BJ (cell line): ENCODE measurements at regions of chr5 and their contacts with region 1.

Region 1: GRCh38 chr5:119411935-119412602 is 40.2 kb upstream of the HSD17B4 start:
- DNase-seq: no peak
- H3K4me3 ChIP-seq: peak overlapping the region; percentile 38
- H3K27me3 ChIP-seq: 0 out of 2 replicates have a peak, but pooled peaks cover 1% of the 10 kb centered on the region
- CTCF ChIP-seq: peak; percentile 81

Region 2: DNA sequence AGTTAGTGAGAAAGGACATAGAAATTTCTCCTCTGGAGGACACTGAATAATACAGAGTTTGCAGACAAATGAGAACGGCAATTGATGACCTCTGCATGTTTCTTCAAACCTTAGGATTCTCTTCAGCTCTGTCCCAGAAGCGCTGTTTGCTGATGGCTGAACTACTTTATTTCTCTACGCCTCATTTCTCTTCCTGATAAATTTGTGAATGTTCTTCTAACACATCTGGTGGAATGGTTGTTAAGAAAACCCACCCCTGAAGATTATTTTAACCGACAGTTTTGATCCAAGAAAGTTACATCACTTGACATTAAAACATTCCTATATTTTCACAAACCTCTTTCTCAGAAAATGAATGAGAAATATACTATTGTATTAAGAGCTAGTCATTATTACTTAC is 1574.3 kb before region 1 on chr5:
- CTCF ChIA-PET with region 1: no interaction called
- POLR2A ChIA-PET with region 1: no interaction called
- DNase-seq: no peak
- H3K4me3 ChIP-seq: no peak overlapping the region
- H3K27me3 ChIP-seq: no peaks in the 10 kb centered on the region
- CTCF ChIP-seq: no peak

Region 3: DNA sequence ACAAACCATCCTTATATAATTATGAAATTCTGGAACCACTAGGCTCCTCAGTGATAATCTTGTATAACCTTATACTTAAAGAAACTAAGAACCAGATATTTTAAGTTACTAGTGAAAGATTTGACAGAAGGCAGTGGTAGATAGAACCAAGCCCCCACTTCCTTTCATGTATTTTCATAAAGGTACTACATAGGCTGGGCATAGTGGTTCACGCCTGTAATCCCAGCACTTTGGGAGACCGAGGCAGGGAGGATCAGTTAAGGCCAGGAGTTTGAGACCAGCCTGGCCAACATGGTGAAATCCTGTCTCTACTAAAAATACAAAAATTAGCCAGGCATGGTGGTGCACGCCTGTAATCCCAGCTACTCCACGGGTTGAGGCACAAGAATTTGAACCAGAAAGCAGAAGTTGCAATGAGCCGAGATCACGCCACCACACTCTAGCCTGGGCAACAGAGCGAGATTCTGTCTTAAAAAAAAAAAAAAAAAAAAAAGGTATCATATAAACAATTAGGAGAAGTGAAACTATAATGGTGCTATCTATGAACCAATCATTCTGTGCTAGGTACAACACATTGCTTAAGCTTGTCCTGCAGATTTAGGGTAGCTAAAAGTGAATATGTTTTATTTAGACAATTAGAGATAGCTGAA is 395.8 kb before region 1 on chr5:
- CTCF ChIA-PET with region 1: interaction called, 77 read pairs
- POLR2A ChIA-PET with region 1: no interaction called
- DNase-seq: no peak
- H3K4me3 ChIP-seq: no peak overlapping the region
- H3K27me3 ChIP-seq: no peaks in the 10 kb centered on the region
- CTCF ChIP-seq: no peak

Region 4: GRCh38 chr5:119267958-119268386 is 144.1 kb before region 1 on chr5:
- CTCF ChIA-PET with region 1: interaction called, 16 read pairs
- POLR2A ChIA-PET with region 1: no interaction called
- DNase-seq: peak; percentile 73
- H3K4me3 ChIP-seq: peak overlapping the region; percentile 75
- H3K27me3 ChIP-seq: no peaks in the 10 kb centered on the region; the same call in 1 of the 2 replicates
- CTCF ChIP-seq: peak; percentile 86

Region 5: DNA sequence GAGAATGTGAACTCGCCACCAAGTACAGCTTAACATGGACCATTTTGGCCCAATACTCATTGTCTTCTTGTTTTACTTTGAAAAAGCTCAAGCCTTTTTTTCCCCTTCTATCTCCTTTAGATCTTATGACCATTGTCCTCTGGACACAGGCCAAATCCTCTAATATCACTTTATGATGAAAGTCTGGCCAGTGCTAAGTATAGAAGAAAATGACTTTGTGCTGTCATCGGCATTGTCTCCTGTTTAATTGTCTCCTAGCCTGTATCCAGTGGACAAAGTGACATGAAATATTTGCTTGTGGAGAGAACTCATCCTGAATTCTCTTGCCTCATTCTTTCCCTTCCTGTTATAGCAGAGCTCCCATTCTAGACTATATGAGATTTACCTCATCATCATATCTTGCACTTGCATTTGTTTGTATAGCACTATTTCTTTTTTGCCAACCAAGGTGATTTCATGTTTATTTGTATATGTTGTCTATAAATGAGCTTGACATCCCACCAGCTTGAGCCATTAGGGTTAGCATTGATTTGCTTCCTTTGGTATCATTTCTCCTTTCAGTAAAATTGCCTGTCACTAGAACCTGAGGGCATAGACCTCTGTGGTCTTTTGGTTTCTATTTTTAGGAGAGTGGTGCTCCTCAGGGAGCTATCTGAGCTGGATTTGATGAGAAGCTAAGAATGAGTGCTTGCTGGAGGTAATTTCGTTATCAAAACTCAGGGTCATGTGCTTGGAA is 75.1 kb before region 1 on chr5:
- CTCF ChIA-PET with region 1: interaction called, 42 read pairs
- POLR2A ChIA-PET with region 1: no interaction called
- DNase-seq: no peak
- H3K4me3 ChIP-seq: no peak overlapping the region
- H3K27me3 ChIP-seq: no peaks in the 10 kb centered on the region
- CTCF ChIP-seq: no peak

Region 6: DNA sequence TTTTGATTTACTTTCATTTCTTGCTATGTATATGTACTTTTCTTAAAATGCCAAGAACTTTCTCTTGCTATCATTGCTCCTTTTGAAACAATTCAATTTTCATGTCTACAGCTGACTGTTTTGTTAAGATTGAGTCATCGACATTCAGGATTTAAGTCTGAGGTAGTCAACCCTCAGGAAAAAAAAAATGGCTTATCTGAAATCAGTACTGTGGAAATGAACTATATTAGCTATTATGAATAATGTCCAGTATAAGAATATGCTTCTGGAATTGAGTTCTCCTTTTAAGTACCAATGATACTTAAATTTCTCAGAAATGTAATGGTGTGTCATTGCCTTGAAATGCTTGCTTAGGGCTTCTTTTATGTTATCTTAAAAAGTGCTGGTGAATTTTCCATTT is 18.3 kb before region 1 on chr5:
- CTCF ChIA-PET with region 1: interaction called, 12 read pairs
- POLR2A ChIA-PET with region 1: no interaction called
- DNase-seq: no peak
- H3K4me3 ChIP-seq: no peak overlapping the region
- H3K27me3 ChIP-seq: no peaks in the 10 kb centered on the region
- CTCF ChIP-seq: no peak

Region 7: GRCh38 chr5:119435436-119436132 is 23.5 kb after region 1 on chr5:
- CTCF ChIA-PET with region 1: interaction called, 13 read pairs
- POLR2A ChIA-PET with region 1: no interaction called
- DNase-seq: no peak
- H3K4me3 ChIP-seq: no peak overlapping the region
- H3K27me3 ChIP-seq: peaks cover 4% of the 10 kb centered on the region
- CTCF ChIP-seq: peak; percentile 78